ENCODE measurements at regions of chr1 and their contacts with region 1.

Region 1: DNA sequence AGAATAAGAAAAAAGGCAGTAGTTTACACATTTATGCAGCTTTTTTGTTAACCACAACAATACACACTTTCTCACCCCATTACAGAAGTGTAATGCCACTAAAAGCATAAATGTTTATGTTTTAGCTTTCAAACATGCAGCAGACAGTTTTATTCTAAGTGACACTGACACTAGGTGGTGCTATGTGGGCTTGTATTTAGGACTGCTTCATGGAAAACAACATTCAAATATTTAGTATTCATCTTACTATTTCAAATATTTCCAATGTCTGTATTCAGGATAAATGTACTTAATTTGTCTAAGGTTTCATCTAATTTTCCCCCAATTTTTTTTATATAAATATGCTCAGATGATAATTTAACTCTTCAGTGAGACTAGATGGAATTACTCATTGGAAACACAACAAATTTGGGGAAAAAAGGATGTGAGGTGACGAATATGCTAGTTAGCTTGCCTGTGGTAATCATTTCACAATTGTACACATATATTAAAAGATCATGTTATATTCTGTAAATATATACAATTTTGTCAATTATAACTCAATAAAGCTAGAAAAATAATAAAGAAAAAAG is 71.4 kb downstream of the USP1 start:
- H3K4me3 Mint-ChIP-seq: no peak overlapping the region
- H3K27ac Mint-ChIP-seq: no peak overlapping the region
- H3K4me1 Mint-ChIP-seq: no peaks in the 10 kb centered on the region
- H3K27me3 Mint-ChIP-seq: no peaks in the 10 kb centered on the region

Region 2: DNA sequence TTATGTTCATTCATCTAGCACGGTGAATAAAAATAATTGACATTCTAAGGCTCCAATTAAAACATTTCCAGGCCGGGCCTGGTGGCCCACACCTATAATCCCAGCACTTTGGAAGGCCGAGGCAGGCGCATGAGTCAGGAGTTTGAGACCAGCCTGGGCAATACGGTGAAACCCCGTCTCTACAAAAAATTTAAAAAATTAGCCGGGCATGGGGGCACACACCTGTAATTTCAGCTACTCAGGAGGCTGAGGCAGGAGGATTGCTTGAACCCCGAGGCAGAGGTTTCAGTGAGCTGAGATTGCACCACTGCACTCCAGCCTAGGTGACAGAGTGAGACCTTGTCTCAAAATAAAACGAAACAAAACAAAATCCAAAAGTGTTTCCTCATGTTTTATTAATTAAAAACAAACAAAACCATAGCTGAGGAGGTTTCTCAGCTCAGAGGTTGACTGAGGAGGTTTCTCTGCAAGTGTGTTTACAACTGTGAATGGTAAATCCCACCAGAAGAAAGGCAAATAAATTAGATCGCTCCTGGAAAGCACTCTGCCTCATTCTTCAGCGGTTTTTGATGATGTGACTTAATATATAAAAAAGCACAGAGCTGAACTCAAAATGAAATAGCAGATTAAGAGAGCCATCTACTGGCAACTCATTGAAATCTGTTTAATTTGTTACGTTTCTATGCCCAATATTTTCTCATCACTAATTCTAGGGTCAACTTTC is 238.0 kb after region 1 on chr1:
- intact Hi-C with region 1: loop called (anchors 1 kb)
- H3K4me3 Mint-ChIP-seq: no peak overlapping the region
- H3K27ac Mint-ChIP-seq: no peak overlapping the region
- H3K4me1 Mint-ChIP-seq: peaks cover under 1% of the 10 kb centered on the region
- H3K27me3 Mint-ChIP-seq: peaks cover 6% of the 10 kb centered on the region